Activated CD4-positive, alpha-beta memory T cell treated with anti-CD3 and anti-CD28 coated beads for 36 hours (primary cell): ENCODE measurements at regions of chr2 and their contacts with region 1.

Region 1: GRCh38 chr2:177164584-177165052 is 48.0 kb upstream of the HNRNPA3 start:
- DNase-seq: peak; percentile 86
- H3K4me3 Mint-ChIP-seq: no peak overlapping the region
- H3K27ac Mint-ChIP-seq: no peak overlapping the region
- H3K4me1 Mint-ChIP-seq: peaks cover 16% of the 10 kb centered on the region
- H3K27me3 Mint-ChIP-seq: no peaks in the 10 kb centered on the region

Region 2: GRCh38 chr2:177195194-177195593 is 30.6 kb after region 1 on chr2:
- CTCF ChIA-PET with region 1: interaction called, 25 read pairs
- POLR2A ChIA-PET with region 1: no interaction called
- intact Hi-C with region 1: loop called (anchors 2 kb)
- DNase-seq: no peak
- H3K4me3 Mint-ChIP-seq: no peak overlapping the region
- H3K27ac Mint-ChIP-seq: no peak overlapping the region
- H3K4me1 Mint-ChIP-seq: peaks cover 4% of the 10 kb centered on the region
- H3K27me3 Mint-ChIP-seq: no peaks in the 10 kb centered on the region

Region 3: GRCh38 chr2:177229448-177230242 is 65.0 kb after region 1 on chr2:
- CTCF ChIA-PET with region 1: interaction called, 10 read pairs
- POLR2A ChIA-PET with region 1: interaction called, 3 read pairs
- intact Hi-C with region 1: no loop called
- DNase-seq: no peak
- H3K4me3 Mint-ChIP-seq: no peak overlapping the region
- H3K27ac Mint-ChIP-seq: peak overlapping the region; percentile 77
- H3K4me1 Mint-ChIP-seq: peaks cover 55% of the 10 kb centered on the region
- H3K27me3 Mint-ChIP-seq: no peaks in the 10 kb centered on the region

Region 4: GRCh38 chr2:177281400-177282180 is 117.0 kb after region 1 on chr2:
- CTCF ChIA-PET with region 1: interaction called, 15 read pairs
- POLR2A ChIA-PET with region 1: no interaction called
- intact Hi-C with region 1: no loop called
- DNase-seq: no peak
- H3K4me3 Mint-ChIP-seq: no peak overlapping the region
- H3K27ac Mint-ChIP-seq: no peak overlapping the region
- H3K4me1 Mint-ChIP-seq: no peaks in the 10 kb centered on the region
- H3K27me3 Mint-ChIP-seq: no peaks in the 10 kb centered on the region

Region 5: GRCh38 chr2:177392373-177393202 is 228.0 kb after region 1 on chr2 and contains the start of gene AGPS:
- CTCF ChIA-PET with region 1: interaction called, 10 read pairs
- POLR2A ChIA-PET with region 1: interaction called, 4 read pairs
- intact Hi-C with region 1: no loop called
- DNase-seq: peak; percentile 88
- H3K4me3 Mint-ChIP-seq: peak within 1 kb of the TSS; percentile 87
- H3K27ac Mint-ChIP-seq: peak within 1 kb of the TSS; percentile 70
- H3K4me1 Mint-ChIP-seq: peaks cover 56% of the 10 kb centered on the region
- H3K27me3 Mint-ChIP-seq: no peaks in the 10 kb centered on the region
- total RNA-seq, gene AGPS: 51.9 to 53.0 TPM

Region 6: GRCh38 chr2:177604271-177605065 is 439.9 kb after region 1 on chr2:
- CTCF ChIA-PET with region 1: interaction called, 14 read pairs
- POLR2A ChIA-PET with region 1: no interaction called
- intact Hi-C with region 1: loop called (anchors 10 kb)
- DNase-seq: no peak
- H3K4me3 Mint-ChIP-seq: no peak overlapping the region
- H3K27ac Mint-ChIP-seq: no peak overlapping the region
- H3K4me1 Mint-ChIP-seq: no peaks in the 10 kb centered on the region
- H3K27me3 Mint-ChIP-seq: peaks cover 8% of the 10 kb centered on the region

Region 7: DNA sequence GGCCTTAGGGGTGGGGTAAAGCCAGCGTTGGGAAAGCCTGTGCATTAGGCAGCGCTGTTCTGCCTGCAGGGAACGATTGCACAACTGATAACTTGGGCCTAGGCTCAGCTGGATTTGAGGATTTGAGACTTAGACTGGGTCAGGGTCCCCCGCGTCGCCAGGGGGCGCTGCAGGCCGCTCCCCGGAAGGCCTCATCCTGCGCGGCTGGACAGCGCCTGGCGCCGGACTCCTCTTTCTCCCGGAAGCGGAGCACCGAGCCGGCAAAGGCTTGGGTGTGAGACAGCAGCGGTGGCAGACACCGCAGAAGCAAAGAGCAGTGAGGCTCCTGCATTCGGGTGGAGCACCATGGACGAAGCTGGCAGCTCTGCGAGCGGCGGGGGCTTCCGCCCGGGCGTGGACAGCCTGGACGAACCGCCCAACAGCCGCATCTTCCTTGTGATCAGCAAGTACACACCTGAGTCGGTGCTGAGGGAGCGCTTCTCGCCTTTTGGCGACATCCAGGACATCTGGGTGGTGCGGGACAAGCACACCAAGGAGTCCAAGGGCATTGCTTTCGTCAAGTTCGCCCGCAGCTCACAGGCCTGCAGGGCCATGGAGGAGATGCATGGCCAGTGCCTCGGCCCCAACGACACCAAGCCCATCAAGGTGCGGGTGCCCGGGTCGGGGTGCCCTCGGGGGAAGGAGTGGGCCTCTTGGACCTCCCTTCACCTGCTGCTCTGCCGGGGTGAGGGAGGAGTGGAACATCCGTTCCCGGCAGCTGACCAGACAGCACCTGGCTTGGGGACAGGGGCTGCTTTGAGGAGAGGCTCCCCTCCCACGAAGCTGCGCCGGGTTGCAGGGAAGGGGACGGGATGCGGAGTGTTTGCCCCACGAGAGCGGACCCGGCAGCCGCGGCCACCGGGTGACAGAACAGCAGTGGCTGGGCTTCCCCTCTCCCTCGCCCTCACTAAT is 947.9 kb after region 1 on chr2 and contains the start of gene RBM45:
- CTCF ChIA-PET with region 1: no interaction called
- POLR2A ChIA-PET with region 1: no interaction called
- intact Hi-C with region 1: loop called (anchors 10 kb)
- DNase-seq: peak; percentile 91
- H3K4me3 Mint-ChIP-seq: peak within 1 kb of the TSS; percentile 95
- H3K27ac Mint-ChIP-seq: peak within 1 kb of the TSS; percentile 74
- H3K4me1 Mint-ChIP-seq: peaks cover 36% of the 10 kb centered on the region
- H3K27me3 Mint-ChIP-seq: no peaks in the 10 kb centered on the region
- total RNA-seq, gene RBM45: 12.2 to 12.5 TPM